ENCODE measurements at regions of chr15 and their contacts with region 1.

Region 1: GRCh38 chr15:25933456-25934158 is 70.5 kb upstream of the ATP10A start:
- DNase-seq: peak; percentile 70
- H3K4me3 ChIP-seq: no peak overlapping the region; a peak in 1 of 4 replicates
- H3K27ac ChIP-seq: no peak overlapping the region
- H3K4me1 ChIP-seq: no peaks in the 10 kb centered on the region; a peak in 1 of 4 replicates
- H3K27me3 ChIP-seq: no peaks in the 10 kb centered on the region
- CTCF ChIP-seq: peak; percentile 21; the same call in 1 of the 2 replicates
- EP300 ChIP-seq: no peak
- RAD21 ChIP-seq: peak; percentile 82

Region 2: DNA sequence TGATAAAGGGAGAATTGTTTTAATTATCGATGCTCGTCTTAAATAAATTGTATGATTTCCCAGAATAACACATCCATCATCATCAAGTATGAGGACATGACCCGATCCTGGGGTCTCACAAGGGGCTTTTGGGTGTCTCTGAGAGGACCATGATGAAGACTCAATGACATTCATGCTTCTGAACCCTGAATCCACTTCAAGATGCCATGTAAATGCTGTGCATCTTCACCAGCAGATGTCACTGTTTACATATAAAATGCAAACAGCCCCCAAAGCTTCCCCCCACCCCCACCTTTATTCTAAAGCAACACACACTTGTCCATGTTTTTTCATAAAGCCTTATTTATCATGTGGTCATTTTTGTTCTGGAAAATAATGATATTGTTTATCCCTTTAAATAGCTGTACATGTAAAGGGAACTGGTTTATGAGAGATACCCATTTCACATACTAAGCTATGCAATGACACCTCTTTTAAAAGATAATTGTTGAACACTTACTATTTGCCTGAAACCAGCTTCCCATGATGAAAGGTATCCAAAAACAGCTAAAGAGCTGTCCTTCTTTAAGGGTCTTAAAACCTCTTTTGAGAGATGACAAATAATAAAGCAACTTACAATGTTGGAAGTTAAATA is 425.1 kb before region 1 on chr15:
- CTCF ChIA-PET with region 1: interaction called, 67 read pairs
- POLR2A ChIA-PET with region 1: no interaction called
- DNase-seq: peak; percentile 59
- H3K4me3 ChIP-seq: peak overlapping the region in 1 of 2 experiments; percentile 13; a peak in 1 of 4 replicates
- H3K27ac ChIP-seq: no peak overlapping the region
- H3K4me1 ChIP-seq: no peaks in the 10 kb centered on the region; a peak in 1 of 4 replicates
- H3K27me3 ChIP-seq: no peaks in the 10 kb centered on the region
- CTCF ChIP-seq: peak; percentile 66
- EP300 ChIP-seq: no peak
- RAD21 ChIP-seq: peak; percentile 88

Region 3: GRCh38 chr15:25682340-25682739 is 251.3 kb before region 1 on chr15:
- CTCF ChIA-PET with region 1: interaction called, 10 read pairs
- POLR2A ChIA-PET with region 1: no interaction called
- DNase-seq: no peak
- H3K4me3 ChIP-seq: no peak overlapping the region
- H3K27ac ChIP-seq: no peak overlapping the region
- H3K4me1 ChIP-seq: peaks cover 0 to 3% of the 10 kb centered on the region in 2 experiments; a peak in 1 of 4 replicates
- H3K27me3 ChIP-seq: no peaks in the 10 kb centered on the region
- CTCF ChIP-seq: no peak
- EP300 ChIP-seq: no peak
- RAD21 ChIP-seq: no peak

Region 4: GRCh38 chr15:25739687-25740121 is 193.9 kb before region 1 on chr15:
- CTCF ChIA-PET with region 1: interaction called, 19 read pairs
- POLR2A ChIA-PET with region 1: no interaction called
- DNase-seq: peak; percentile 72
- H3K4me3 ChIP-seq: no peak overlapping the region
- H3K27ac ChIP-seq: no peak overlapping the region
- H3K4me1 ChIP-seq: no peaks in the 10 kb centered on the region; a peak in 1 of 4 replicates
- H3K27me3 ChIP-seq: no peaks in the 10 kb centered on the region
- CTCF ChIP-seq: no peak
- EP300 ChIP-seq: no peak
- RAD21 ChIP-seq: peak; percentile 71

Region 5: DNA sequence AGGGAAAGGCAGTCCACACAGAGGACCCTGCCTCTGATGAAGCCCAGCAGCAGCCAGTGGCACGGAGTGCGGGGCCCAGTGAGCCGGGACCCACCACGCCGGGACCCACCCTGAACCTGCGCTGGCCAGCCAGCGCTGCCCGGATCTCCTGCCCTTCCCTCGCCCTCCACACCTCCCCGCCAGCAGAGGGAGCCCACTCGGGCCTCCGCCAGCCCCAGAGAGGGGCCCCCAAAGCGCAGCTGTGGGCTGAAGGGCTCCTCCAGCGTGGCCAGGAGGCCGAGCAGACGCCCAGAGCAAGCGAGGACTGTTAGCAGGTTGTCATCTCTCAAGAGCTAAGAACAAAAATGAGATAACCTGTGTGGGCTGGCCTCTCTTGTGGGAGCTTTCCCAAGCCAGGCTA is 10.8 kb after region 1 on chr15:
- CTCF ChIA-PET with region 1: interaction called, 18 read pairs
- POLR2A ChIA-PET with region 1: no interaction called
- DNase-seq: no peak
- H3K4me3 ChIP-seq: no peak overlapping the region
- H3K27ac ChIP-seq: no peak overlapping the region
- H3K4me1 ChIP-seq: no peaks in the 10 kb centered on the region
- H3K27me3 ChIP-seq: no peaks in the 10 kb centered on the region
- CTCF ChIP-seq: no peak
- EP300 ChIP-seq: no peak
- RAD21 ChIP-seq: no peak

Region 6: DNA sequence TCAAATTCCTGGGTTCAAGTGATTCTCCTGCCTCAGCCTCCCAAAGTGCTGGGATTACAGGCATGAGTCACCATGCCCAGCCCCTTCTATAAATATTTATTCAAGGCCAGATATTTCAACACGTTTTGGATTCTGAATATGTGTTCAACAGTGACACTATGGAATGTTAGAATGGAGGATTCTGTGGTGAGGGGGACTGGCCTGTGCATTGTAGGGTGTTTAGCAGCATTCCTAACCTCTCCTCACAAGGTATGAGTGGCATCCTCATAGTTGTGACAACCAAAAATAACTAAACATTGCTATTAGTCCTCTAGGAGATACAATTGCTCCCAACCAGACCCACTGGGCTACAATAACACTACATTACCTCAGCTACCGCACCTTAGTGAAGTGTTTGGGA is 33.5 kb after region 1 on chr15:
- CTCF ChIA-PET with region 1: no interaction called
- POLR2A ChIA-PET with region 1: no interaction called
- DNase-seq: no peak
- H3K4me3 ChIP-seq: no peak overlapping the region
- H3K27ac ChIP-seq: no peak overlapping the region
- H3K4me1 ChIP-seq: no peaks in the 10 kb centered on the region
- H3K27me3 ChIP-seq: no peaks in the 10 kb centered on the region
- CTCF ChIP-seq: no peak
- EP300 ChIP-seq: no peak
- RAD21 ChIP-seq: no peak

Region 7: DNA sequence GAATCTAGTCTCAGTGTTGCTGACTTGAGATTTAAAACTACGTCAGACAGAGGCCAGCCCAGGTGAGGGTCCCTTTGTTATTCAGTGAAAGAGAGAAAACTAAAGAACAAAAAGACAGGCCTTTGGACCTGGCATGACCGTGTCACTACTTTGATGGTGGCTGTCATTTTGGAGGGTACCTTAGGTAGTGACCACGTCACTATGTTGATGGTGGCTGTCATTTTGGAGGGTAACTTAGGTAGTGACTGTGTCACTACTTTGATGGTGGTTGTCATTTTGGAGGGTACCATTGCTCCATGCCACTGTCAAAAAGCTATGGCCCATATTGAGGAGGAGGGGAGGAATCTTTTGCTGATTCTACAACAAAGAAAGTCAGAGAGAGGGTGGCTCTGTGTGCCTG is 60.8 kb after region 1 on chr15:
- CTCF ChIA-PET with region 1: no interaction called
- POLR2A ChIA-PET with region 1: no interaction called
- DNase-seq: no peak
- H3K4me3 ChIP-seq: no peak overlapping the region
- H3K27ac ChIP-seq: no peak overlapping the region
- H3K4me1 ChIP-seq: no peaks in the 10 kb centered on the region
- H3K27me3 ChIP-seq: no peaks in the 10 kb centered on the region
- CTCF ChIP-seq: no peak
- EP300 ChIP-seq: no peak
- RAD21 ChIP-seq: no peak

Region 8: GRCh38 chr15:26260517-26261133 is 327.0 kb after region 1 on chr15:
- CTCF ChIA-PET with region 1: interaction called, 10 read pairs
- POLR2A ChIA-PET with region 1: no interaction called
- DNase-seq: peak; percentile 59
- H3K4me3 ChIP-seq: no peak overlapping the region; a peak in 1 of 4 replicates
- H3K27ac ChIP-seq: no peak overlapping the region
- H3K4me1 ChIP-seq: no peaks in the 10 kb centered on the region
- H3K27me3 ChIP-seq: no peaks in the 10 kb centered on the region
- CTCF ChIP-seq: peak; percentile 48
- EP300 ChIP-seq: no peak
- RAD21 ChIP-seq: peak; percentile 71

Measured in SK-N-SH (cell line).